Mammary epithelial cell (primary cell): ENCODE measurements at regions of chr2 and their contacts with region 1.

Region 1: DNA sequence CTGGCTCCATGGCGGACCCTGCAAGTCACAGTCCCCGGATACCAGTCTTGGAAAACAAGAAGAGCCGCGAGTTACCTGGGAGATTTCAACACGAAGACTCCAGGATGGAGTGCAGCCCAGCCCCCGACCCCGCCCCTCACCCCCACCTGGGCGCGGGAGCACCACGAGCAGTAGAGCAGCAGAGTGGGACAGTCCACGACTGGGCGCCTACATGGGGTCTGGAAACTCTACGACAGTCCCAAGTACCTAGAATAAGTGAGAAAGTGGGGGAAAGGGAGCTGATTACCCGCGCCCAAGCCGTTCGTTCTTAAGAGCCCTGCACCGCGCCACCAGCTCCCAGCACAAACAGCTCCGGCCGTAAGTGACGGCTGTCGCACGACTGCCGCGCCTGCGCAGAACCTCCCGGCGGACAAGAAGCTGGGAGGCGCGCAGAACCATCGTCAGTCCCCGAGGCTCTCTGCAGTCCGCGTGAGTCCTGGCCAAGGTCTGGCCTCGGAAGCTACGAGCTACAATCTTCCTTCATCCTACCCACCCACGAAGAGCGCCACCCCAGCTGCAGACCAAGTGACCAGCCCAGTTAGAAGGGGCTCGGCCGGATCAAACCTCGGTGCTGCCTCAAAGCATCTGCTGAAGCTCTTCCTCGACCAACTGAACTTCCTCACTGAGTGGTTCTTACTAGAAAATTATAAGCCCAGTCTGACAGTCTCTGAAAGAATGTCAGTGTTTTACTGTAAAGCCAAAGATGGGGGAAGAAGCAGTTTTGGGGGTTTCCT is at the start of gene DPY30:
- DNase-seq: peak; percentile 89
- H3K4me3 ChIP-seq: peak within 1 kb of the TSS; percentile 68 to 94 (median 89)
- H3K27ac ChIP-seq: peak within 1 kb of the TSS; percentile 65
- H3K4me1 ChIP-seq: peaks cover 4% of the 10 kb centered on the region
- H3K27me3 ChIP-seq: no peaks in the 10 kb centered on the region
- CTCF ChIP-seq: no peak
- total RNA-seq, gene DPY30: 46.7 to 64.7 TPM

Region 2: DNA sequence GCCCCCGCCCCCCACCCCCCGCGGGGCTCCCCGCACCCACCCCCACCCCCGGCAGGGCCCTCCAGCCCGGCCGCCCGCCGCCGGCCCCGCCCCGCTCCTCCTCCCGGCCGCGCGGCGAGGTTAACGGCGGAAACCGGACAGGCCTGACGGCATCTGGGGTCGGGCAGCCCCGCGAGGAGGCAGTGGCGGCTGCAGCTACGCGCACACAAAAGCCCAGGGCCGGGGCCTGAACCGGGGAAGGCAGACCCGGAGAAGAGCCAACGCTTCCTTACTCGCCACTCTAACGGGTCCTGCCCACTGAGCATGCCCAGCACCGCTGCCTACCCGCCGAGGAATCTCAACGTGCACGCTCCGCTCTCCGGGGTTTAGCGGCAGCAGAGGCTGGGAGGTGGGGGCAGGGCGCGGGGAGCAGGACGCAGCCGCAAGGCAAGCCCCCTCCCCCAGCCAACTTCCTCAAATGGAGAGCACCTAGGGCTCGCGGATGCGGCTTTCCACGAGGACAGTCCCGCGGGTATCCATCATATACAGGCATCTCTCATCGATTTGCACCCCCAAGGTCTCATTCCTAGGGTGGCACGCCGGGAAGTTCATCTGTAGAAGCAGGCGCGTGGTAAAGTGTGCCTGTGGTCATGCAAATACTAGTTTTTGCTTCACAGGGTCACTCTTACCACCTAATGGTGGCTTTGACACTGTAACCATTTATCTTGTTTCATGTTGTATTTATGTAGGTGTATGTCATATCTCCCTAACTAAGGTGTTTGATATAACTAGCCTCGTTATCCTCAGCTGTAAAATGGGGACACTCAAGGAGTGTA is 28.8 kb before region 1 on chr2 and contains the start of gene MEMO1:
- CTCF ChIA-PET with region 1: no interaction called
- dilution Hi-C with region 1: no loop called
- in situ Hi-C with region 1: no loop called
- intact Hi-C with region 1: loop called (anchors 2 kb)
- DNase-seq: peak; percentile 93
- H3K4me3 ChIP-seq: peak within 1 kb of the TSS; percentile 86 to 98 (median 96)
- H3K27ac ChIP-seq: peak within 1 kb of the TSS; percentile 47
- H3K4me1 ChIP-seq: peaks cover 11% of the 10 kb centered on the region
- H3K27me3 ChIP-seq: no peaks in the 10 kb centered on the region
- CTCF ChIP-seq: peak in 1 of 2 donors; percentile 20
- total RNA-seq, gene MEMO1: 47.8 to 75.3 TPM

Region 3: GRCh38 chr2:32051836-32052439 is 12.3 kb after region 1 on chr2:
- CTCF ChIA-PET with region 1: interaction called, 10 read pairs
- dilution Hi-C with region 1: no loop called
- in situ Hi-C with region 1: no loop called
- intact Hi-C with region 1: no loop called
- DNase-seq: no peak
- H3K4me3 ChIP-seq: no peak overlapping the region
- H3K27ac ChIP-seq: no peak overlapping the region
- H3K4me1 ChIP-seq: no peaks in the 10 kb centered on the region
- H3K27me3 ChIP-seq: no peaks in the 10 kb centered on the region
- CTCF ChIP-seq: no peak

Region 4: DNA sequence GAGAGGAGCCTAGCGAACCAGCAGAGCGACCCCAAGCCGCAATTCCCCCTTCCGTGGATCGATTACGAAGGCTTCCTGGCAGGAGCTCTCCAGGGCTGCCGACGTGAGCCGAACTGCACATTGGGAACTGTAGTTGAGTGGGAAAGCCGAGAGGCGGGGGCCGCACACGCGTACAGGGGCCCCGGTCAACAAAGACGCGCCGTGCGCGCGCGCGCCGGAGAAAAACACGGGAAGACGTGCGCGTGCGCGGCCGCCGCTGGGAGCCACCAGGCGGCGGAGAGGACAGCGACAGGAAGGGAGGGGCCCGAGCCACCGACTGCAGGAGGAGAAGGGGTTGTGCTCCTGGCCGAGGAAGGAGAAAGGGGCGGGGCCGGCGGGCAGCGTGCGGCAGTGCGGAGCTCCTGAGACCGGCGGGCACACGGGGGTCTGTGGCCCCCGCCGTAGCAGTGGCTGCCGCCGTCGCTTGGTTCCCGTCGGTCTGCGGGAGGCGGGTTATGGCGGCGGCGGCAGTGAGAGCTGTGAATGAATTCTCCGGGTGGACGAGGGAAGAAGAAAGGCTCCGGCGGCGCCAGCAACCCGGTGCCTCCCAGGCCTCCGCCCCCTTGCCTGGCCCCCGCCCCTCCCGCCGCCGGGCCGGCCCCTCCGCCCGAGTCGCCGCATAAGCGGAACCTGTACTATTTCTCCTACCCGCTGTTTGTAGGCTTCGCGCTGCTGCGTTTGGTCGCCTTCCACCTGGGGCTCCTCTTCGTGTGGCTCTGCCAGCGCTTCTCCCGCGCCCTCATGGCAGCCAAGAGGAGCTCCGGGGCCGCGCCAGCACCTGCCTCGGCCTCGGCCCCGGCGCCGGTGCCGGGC is 23.9 kb after region 1 on chr2 and contains the start of gene SPAST:
- CTCF ChIA-PET with region 1: interaction called, 7 read pairs
- dilution Hi-C with region 1: no loop called
- in situ Hi-C with region 1: no loop called
- intact Hi-C with region 1: loop called (anchors 2 kb)
- DNase-seq: peak; percentile 97
- H3K4me3 ChIP-seq: peak within 1 kb of the TSS; percentile 74 to 98 (median 75)
- H3K27ac ChIP-seq: peak within 1 kb of the TSS; percentile 56
- H3K4me1 ChIP-seq: peaks cover 25% of the 10 kb centered on the region
- H3K27me3 ChIP-seq: no peaks in the 10 kb centered on the region
- CTCF ChIP-seq: peak; percentile 4 to 61
- total RNA-seq, gene SPAST: 13.7 to 22.5 TPM

Region 5: GRCh38 chr2:32135409-32135808 is 95.8 kb after region 1 on chr2:
- CTCF ChIA-PET with region 1: no interaction called
- dilution Hi-C with region 1: no loop called
- in situ Hi-C with region 1: no loop called
- intact Hi-C with region 1: no loop called
- DNase-seq: peak; percentile 72
- H3K4me3 ChIP-seq: no peak overlapping the region
- H3K27ac ChIP-seq: no peak overlapping the region
- H3K4me1 ChIP-seq: no peaks in the 10 kb centered on the region
- H3K27me3 ChIP-seq: no peaks in the 10 kb centered on the region
- CTCF ChIP-seq: peak; percentile 28 to 38

Region 6: DNA sequence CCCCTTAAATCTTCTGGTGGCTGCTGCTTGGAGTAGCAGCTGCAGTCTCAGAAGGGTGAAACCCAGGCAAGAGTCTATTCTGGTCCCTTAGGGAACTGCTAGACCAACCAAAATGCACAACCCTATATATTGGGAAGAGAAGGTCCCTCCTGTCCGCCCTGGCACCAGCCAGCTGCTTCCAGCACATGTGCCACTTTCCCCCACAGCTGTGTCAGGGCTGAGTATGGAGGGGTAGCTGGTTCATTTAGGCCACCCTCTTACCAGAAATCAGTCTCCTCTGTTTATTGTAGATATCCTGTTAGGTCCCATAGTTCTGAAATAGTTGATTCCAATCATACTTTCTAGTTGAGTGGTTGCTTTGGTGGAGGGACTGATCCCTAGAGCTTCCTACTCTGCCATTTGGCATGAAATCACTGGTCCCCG is 386.1 kb after region 1 on chr2:
- CTCF ChIA-PET with region 1: interaction called, 16 read pairs
- dilution Hi-C with region 1: no loop called
- in situ Hi-C with region 1: no loop called
- intact Hi-C with region 1: no loop called
- DNase-seq: no peak
- H3K4me3 ChIP-seq: no peak overlapping the region
- H3K27ac ChIP-seq: no peak overlapping the region
- H3K4me1 ChIP-seq: no peaks in the 10 kb centered on the region
- H3K27me3 ChIP-seq: no peaks in the 10 kb centered on the region
- CTCF ChIP-seq: no peak